ENCODE measurements at regions of chr9 and their contacts with region 1.

Region 1: GRCh38 chr9:109401168-109401989 is 80.5 kb upstream of the EPB41L4B start:
- DNase-seq: no peak
- ATAC-seq: peak; percentile 51
- H3K4me3 Mint-ChIP-seq: peak overlapping the region; percentile 53
- H3K27ac Mint-ChIP-seq: peak overlapping the region; percentile 62
- H3K4me1 Mint-ChIP-seq: peaks cover 45% of the 10 kb centered on the region
- H3K27me3 Mint-ChIP-seq: peaks cover 13% of the 10 kb centered on the region
- CTCF ChIP-seq: no peak

Region 2: GRCh38 chr9:109012876-109013678 is 388.3 kb before region 1 on chr9 and contains the start of gene CTNNAL1:
- CTCF ChIA-PET with region 1: no interaction called
- POLR2A ChIA-PET with region 1: no interaction called
- intact Hi-C with region 1: loop called (anchors 5 kb)
- DNase-seq: peak; percentile 88
- ATAC-seq: peak; percentile 96
- H3K4me3 Mint-ChIP-seq: peak within 1 kb of the TSS; percentile 92
- H3K27ac Mint-ChIP-seq: peak within 1 kb of the TSS; percentile 72
- H3K4me1 Mint-ChIP-seq: peaks cover 38% of the 10 kb centered on the region
- H3K27me3 Mint-ChIP-seq: peaks cover 9% of the 10 kb centered on the region
- CTCF ChIP-seq: no peak
- total RNA-seq, gene CTNNAL1: 1.9 and 2.4 TPM in 2 replicates

Region 3: DNA sequence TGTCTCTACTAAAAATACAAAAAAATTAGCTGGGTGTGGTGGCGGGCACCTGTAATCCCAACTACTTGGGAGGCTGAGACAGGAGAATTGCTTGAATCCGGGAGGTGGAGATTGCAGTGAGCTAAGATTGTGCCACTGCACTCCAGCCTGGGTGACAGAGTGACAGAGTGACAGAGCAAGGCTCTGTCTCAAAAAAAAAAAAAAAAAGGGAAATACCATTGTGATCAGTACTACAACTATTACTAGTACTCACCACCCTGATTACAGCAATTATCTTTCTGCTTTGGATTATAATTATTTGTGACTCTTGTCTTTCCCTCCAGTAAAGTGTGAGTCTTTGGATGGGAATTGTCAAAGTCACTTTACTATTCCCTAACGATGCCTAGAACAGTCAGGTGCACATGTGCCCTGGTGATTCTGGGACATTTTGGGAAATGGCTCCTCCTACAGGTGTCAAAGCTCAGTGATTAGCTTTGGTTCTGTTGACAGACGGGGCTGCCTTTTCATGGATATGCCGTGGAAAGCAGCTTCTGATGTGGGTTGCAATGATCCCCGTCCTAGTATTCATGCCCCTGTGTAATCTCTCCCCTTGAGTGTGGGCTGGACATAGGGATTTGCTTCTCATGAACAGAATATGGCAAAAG is 202.5 kb before region 1 on chr9:
- CTCF ChIA-PET with region 1: no interaction called
- POLR2A ChIA-PET with region 1: no interaction called
- intact Hi-C with region 1: loop called (anchors 5 kb)
- DNase-seq: no peak
- ATAC-seq: no peak
- H3K4me3 Mint-ChIP-seq: no peak overlapping the region
- H3K27ac Mint-ChIP-seq: no peak overlapping the region
- H3K4me1 Mint-ChIP-seq: no peaks in the 10 kb centered on the region
- H3K27me3 Mint-ChIP-seq: peaks cover 10% of the 10 kb centered on the region
- CTCF ChIP-seq: no peak

Region 4: DNA sequence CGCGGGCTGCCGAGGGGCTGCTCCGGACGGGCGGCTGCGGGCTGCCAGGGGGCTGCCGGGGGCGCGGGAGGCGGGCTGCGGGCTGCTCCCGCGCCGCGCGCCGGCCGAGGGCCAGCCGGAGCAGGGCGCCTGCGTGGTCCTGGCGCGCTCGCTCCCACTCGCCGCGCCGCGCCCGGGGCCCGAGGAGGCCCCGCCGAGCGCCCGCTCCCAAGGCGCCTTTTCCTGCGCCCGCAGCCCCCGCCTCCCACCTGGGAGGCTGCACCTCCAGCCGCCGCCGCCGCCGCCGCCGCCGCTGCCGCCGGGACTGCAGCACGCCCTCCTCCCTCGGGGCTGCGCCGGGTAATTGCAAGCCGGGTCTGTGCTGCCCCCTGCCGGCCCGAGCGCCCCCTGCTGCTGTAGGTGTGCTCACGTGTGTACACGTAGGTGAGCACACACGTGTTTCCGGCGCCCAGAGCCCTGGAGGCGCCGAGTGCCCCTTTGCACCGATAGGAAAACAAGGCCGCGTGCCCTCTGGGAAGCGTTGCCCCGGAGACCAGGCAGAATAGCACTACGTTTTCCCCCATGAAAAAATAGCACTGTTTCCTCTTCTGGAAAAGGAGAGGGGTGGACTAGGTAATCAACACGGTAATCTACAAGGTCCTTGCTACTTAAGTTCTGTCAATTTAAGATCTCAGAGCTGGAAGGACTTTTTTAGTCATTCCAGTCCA is 80.5 kb before region 1 on chr9 and contains the start of gene EPB41L4B:
- CTCF ChIA-PET with region 1: interaction called, 4 read pairs
- POLR2A ChIA-PET with region 1: interaction called, 6 read pairs
- intact Hi-C with region 1: loop called (anchors 1 kb)
- DNase-seq: peak; percentile 81
- ATAC-seq: peak; percentile 96
- H3K4me3 Mint-ChIP-seq: peak within 1 kb of the TSS; percentile 83
- H3K27ac Mint-ChIP-seq: no peak within 1 kb of the TSS
- H3K4me1 Mint-ChIP-seq: peaks cover 19% of the 10 kb centered on the region
- H3K27me3 Mint-ChIP-seq: peaks cover 57% of the 10 kb centered on the region
- CTCF ChIP-seq: peak; percentile 60
- total RNA-seq, gene EPB41L4B: 5.3 and 6.1 TPM in 2 replicates

Region 5: DNA sequence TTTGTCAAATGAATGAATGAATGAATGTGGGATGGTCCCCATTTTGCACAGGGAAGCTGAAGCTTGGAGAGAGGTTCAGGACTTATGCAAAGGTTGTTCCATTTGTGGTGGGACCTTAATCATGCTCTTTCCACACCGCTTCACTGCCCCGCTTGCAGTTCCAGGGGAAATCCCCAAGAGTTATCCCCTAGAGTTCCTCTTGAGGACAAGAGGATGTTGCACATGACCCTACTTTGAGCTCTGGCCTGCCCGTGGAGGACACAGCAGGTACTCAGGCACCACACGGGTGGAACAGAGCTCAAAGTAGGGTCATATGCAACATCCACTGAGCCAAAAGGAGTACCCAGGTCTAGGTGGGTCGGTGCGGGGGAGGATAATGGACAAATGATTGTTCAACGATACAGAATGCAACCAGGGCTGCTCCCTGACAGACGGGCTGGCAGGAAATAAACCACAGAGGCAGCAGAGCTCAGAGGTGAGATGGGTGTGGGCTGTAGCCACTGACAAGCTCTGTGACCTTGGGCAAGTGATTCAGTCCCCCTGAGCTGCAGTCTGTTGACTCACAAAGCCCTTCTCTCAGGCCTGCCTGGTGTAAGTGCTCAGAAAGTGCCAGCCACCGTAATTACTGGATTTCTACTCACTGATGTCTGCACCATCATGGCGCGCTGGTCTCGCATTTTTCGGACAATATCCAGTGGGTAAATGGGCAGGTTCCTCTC is 20.2 kb before region 1 on chr9:
- CTCF ChIA-PET with region 1: no interaction called
- POLR2A ChIA-PET with region 1: interaction called, 5 read pairs
- intact Hi-C with region 1: loop called (anchors 1 kb)
- DNase-seq: no peak
- ATAC-seq: peak; percentile 83
- H3K4me3 Mint-ChIP-seq: peak overlapping the region; percentile 7
- H3K27ac Mint-ChIP-seq: peak overlapping the region; percentile 65
- H3K4me1 Mint-ChIP-seq: peaks cover 18% of the 10 kb centered on the region
- H3K27me3 Mint-ChIP-seq: peaks cover 15% of the 10 kb centered on the region
- CTCF ChIP-seq: no peak

Region 6: DNA sequence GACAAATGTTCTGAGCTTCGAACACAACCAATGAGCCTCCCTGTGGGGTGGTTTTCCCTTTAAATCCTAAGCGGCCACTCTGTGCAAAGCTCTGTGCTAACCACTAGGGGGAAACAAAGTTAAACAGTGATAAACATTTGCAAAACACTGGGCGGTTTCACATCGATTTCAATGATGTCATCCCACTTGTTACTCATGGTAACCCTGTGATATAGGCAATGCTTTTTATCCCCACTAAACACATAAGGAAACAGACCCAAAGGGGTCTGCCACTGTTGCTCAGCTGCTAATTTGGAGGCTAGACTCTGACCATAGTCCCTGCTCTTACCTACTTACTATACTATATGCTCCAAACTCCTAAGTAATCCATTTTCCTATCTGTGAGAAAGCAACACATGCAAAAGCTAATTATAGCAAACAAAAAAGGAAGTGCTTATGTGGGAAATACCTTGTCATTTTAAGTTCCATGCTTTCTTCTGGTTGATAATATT is 39.5 kb after region 1 on chr9:
- CTCF ChIA-PET with region 1: no interaction called
- POLR2A ChIA-PET with region 1: no interaction called
- intact Hi-C with region 1: loop called (anchors 2 kb)
- DNase-seq: no peak
- ATAC-seq: peak; percentile 78
- H3K4me3 Mint-ChIP-seq: no peak overlapping the region
- H3K27ac Mint-ChIP-seq: no peak overlapping the region
- H3K4me1 Mint-ChIP-seq: peaks cover 23% of the 10 kb centered on the region
- H3K27me3 Mint-ChIP-seq: peaks cover 24% of the 10 kb centered on the region
- CTCF ChIP-seq: no peak